MCF 10A (cell line): ENCODE measurements at regions of chr13 and their contacts with region 1.

Region 1: DNA sequence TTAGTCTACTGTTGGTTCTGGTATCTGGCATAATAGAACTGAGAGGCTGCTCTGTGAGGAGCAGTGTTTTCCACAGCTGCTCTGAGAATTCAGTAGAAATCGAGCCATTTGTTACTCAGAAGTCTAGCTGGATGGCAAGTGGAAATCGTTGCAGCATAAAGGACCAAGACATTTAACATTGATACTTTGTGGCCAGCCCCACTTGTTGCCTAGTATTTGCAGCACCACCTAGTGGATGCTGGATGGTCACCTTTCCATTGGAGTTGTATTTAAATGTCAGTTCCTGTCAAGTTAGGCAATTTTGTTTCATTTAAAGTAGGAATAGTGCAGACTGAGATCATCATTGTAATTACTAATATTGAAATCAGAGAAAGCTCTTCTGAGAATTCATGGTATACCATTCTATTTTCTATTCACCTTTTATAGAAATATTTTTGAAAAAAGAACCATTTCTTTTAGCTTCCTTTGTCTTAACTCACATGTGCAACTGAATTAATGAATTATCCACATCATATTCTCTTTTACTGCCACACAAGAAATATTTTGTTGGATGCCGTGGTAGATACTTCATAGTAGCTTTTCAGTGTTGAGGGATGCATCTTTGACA is 64.6 kb downstream of the PDS5B start:
- DNase-seq: peak; percentile 74
- H3K4me3 Mint-ChIP-seq: no peak overlapping the region
- H3K27ac Mint-ChIP-seq: no peak overlapping the region
- H3K4me1 Mint-ChIP-seq: peaks cover 6% of the 10 kb centered on the region
- H3K27me3 Mint-ChIP-seq: no peaks in the 10 kb centered on the region
- CTCF ChIP-seq: peak; percentile 79

Region 2: GRCh38 chr13:32259116-32259515 is 391.7 kb before region 1 on chr13:
- CTCF ChIA-PET with region 1: no interaction called
- POLR2A ChIA-PET with region 1: no interaction called
- intact Hi-C with region 1: no loop called
- DNase-seq: peak; percentile 11
- H3K4me3 Mint-ChIP-seq: no peak overlapping the region
- H3K27ac Mint-ChIP-seq: no peak overlapping the region
- H3K4me1 Mint-ChIP-seq: peaks cover 29% of the 10 kb centered on the region
- H3K27me3 Mint-ChIP-seq: no peaks in the 10 kb centered on the region
- CTCF ChIP-seq: no peak

Region 3: DNA sequence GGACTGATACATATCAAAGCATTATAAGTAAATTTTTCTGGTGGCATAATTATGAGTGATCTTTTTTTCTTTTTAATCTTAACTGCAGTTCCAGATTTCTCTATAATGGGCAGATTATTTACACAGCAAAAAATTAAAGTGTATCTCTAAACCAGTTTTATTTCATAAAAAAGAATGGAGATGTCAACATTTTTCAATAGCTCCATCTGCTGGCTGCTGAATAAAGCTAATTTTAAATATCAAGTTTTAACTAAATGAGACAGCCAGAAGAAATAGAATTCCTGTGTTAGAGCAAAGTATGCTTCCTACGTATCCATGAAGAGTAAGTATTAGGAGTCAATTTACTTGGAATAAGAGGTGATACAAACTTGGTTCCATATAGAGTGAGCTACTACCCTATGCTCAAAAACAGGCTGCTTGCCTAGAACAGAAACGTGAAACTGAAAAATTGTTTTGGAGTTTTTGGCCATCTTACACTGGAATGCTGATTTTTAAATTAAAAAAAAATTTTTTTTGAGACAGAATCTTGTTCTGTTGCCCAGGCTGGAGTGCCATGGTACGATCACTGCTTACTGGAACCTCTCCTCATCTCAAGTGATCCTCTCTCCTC is 69.5 kb before region 1 on chr13:
- CTCF ChIA-PET with region 1: interaction called, 10 read pairs
- POLR2A ChIA-PET with region 1: interaction called, 14 read pairs
- intact Hi-C with region 1: no loop called
- DNase-seq: peak; percentile 27
- H3K4me3 Mint-ChIP-seq: no peak overlapping the region
- H3K27ac Mint-ChIP-seq: no peak overlapping the region
- H3K4me1 Mint-ChIP-seq: peaks cover 8% of the 10 kb centered on the region
- H3K27me3 Mint-ChIP-seq: no peaks in the 10 kb centered on the region
- CTCF ChIP-seq: peak; percentile 36

Region 4: DNA sequence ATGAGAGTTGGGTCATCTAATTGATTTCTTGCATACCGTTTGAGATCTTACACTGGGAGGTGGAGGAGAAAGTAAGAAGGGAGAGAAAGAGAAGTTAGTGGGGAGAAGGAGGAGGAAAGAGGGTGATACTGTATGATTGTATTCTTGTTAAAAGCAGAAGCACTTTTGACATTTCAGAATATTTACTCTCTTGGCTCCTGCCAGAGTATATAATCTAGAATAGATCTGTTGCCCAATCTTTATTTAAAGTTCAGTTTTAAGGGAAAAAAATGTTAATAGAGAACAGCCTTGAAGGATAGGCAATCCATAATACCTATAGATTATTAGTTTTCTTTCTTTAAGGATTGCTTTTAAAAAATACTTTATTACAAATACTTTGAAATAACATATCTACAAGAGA is 23.0 kb before region 1 on chr13:
- CTCF ChIA-PET with region 1: interaction called, 4 read pairs
- POLR2A ChIA-PET with region 1: interaction called, 3 read pairs
- intact Hi-C with region 1: loop called (anchors 1 kb)
- DNase-seq: no peak
- H3K4me3 Mint-ChIP-seq: no peak overlapping the region
- H3K27ac Mint-ChIP-seq: no peak overlapping the region
- H3K4me1 Mint-ChIP-seq: peaks cover 15% of the 10 kb centered on the region
- H3K27me3 Mint-ChIP-seq: no peaks in the 10 kb centered on the region
- CTCF ChIP-seq: no peak

Region 5: DNA sequence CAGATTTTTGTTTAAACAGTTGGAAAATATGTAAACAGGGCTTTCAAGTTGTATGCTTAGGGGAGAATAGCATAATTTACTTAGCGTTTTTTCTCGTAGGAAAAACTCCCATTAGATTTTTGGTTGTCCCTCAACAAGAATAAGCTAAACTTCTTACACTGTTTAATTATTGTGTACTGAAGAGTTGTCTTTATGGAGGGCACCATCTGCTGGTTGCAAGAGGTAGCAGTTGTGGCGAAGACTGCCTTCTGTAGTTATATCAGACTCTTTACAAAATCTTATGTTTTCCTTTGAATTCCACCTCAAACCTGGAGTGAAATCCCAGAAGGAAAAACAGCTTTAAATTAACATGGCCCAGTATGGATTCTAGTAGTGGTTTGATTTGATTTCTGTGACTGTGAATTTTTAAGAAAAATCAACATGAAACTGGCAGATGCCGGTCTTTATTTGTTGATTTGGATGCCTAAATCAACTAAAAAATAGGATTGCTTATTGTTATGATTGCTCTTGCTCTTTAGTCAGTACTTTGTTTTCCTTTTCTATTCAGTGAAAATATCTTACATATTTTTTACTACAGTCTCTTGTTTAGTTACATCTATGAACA is 11.2 kb before region 1 on chr13:
- CTCF ChIA-PET with region 1: interaction called, 14 read pairs
- POLR2A ChIA-PET with region 1: interaction called, 8 read pairs
- intact Hi-C with region 1: no loop called
- DNase-seq: peak; percentile 68
- H3K4me3 Mint-ChIP-seq: no peak overlapping the region
- H3K27ac Mint-ChIP-seq: no peak overlapping the region
- H3K4me1 Mint-ChIP-seq: peaks cover 15% of the 10 kb centered on the region
- H3K27me3 Mint-ChIP-seq: no peaks in the 10 kb centered on the region
- CTCF ChIP-seq: peak; percentile 63

Region 6: DNA sequence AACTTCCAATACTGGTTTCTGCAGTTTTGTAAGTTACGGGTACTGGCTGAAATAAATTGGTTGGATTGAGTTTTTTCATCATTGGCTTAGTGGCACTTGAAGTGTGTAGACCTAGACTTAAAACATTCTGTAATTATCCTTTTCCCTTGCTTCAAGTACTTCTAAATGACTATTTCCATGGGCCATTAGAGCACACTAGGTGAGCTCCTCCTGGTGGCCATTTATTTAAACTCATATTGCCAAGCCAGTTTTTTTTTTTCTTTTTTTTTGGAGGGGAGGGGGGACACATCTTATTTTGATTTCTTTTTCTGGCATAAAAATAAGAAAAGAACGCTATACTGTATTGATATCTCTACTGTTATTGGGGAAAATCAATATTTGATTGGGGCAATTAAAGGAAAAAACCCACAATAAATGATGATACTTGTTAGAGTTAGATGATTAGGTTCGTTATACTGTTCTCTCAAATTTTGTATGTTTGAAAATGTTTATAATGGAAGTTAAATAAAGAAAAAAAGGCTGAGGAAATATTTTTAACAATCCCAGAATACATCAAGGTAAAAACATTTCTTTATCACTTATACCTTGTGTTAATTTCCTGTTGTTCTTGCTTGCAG is 18.3 kb after region 1 on chr13:
- CTCF ChIA-PET with region 1: interaction called, 29 read pairs
- POLR2A ChIA-PET with region 1: interaction called, 3 read pairs
- intact Hi-C with region 1: no loop called
- DNase-seq: peak; percentile 55
- H3K4me3 Mint-ChIP-seq: no peak overlapping the region
- H3K27ac Mint-ChIP-seq: no peak overlapping the region
- H3K4me1 Mint-ChIP-seq: no peaks in the 10 kb centered on the region
- H3K27me3 Mint-ChIP-seq: no peaks in the 10 kb centered on the region
- CTCF ChIP-seq: peak; percentile 56

Region 7: DNA sequence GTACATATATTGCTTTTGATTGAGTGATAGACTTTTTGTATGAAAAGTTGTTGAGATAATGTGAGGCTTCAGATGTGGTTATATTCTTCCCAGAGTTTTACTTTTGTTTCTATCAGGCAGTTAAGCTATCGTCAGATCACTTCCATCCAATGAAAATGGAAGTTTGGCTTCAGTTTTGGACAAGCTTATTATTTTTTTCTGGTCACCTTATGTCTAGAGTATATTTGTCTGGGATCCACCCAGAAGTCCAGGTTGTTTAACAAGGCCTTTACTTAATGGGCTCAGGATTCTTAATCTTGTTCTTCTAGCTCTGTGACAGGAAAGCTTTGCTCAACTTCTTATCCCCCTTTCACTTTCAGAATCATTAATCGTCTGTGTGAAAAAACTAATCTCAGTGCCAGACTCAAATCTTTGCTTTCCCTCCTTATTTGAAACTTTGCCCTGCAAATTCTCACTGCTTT is 86.3 kb after region 1 on chr13:
- CTCF ChIA-PET with region 1: no interaction called
- POLR2A ChIA-PET with region 1: no interaction called
- intact Hi-C with region 1: no loop called
- DNase-seq: no peak
- H3K4me3 Mint-ChIP-seq: peak overlapping the region; percentile 42
- H3K27ac Mint-ChIP-seq: peak overlapping the region; percentile 63
- H3K4me1 Mint-ChIP-seq: peaks cover 32% of the 10 kb centered on the region
- H3K27me3 Mint-ChIP-seq: no peaks in the 10 kb centered on the region
- CTCF ChIP-seq: no peak